ENCODE measurements at regions of chr6 and their contacts with region 1.

Region 1: GRCh38 chr6:29847871-29848630 is 20.4 kb downstream of the HLA-G start:
- DNase-seq: peak; percentile 69
- H3K4me3 Mint-ChIP-seq: no peak overlapping the region
- H3K27ac Mint-ChIP-seq: no peak overlapping the region
- H3K4me1 Mint-ChIP-seq: peaks cover 13% of the 10 kb centered on the region
- H3K27me3 Mint-ChIP-seq: peaks cover 6% of the 10 kb centered on the region
- CTCF ChIP-seq: peak; percentile 97

Region 2: GRCh38 chr6:29696155-29697125 is 151.6 kb before region 1 on chr6:
- CTCF ChIA-PET with region 1: interaction called, 10 read pairs
- POLR2A ChIA-PET with region 1: no interaction called
- intact Hi-C with region 1: no loop called
- DNase-seq: peak; percentile 57
- H3K4me3 Mint-ChIP-seq: no peak overlapping the region
- H3K27ac Mint-ChIP-seq: no peak overlapping the region
- H3K4me1 Mint-ChIP-seq: no peaks in the 10 kb centered on the region
- H3K27me3 Mint-ChIP-seq: no peaks in the 10 kb centered on the region
- CTCF ChIP-seq: peak; percentile 64

Region 3: DNA sequence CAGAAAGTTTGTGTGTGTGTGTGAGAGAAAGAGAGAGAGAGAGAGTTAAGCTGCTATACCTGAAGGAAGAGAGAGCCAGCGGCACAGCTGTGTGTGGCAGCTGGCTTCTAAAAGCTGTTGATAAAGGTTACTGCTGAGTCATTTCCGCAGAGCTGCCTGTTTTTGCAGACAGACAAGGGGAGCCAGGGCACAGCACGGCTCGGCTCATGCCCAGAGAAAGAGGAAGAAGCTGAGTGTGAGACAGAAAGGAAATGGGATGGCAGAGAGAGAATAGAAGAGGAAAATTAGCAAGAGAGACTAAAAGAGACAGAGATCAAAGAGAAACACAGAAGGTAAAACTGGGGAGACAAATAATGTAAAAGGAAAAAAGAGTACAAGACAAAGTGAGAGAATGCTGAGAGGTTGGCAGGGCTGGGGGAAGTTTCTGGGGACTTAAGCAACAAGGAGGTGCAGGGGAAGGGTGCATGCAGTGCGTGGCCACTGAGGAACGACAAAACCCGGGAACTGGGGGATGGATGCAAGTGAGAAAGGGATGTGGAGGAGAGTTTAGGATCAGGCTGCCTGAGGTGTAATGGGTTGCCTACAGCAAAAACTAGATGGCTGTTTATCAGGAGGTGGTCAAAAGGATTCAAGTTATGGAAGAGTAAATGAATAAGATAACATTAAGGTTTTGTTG is 117.0 kb after region 1 on chr6:
- CTCF ChIA-PET with region 1: interaction called, 22 read pairs
- POLR2A ChIA-PET with region 1: interaction called, 3 read pairs
- intact Hi-C with region 1: loop called (anchors 2 kb)
- DNase-seq: peak; percentile 88
- H3K4me3 Mint-ChIP-seq: peak overlapping the region; percentile 67
- H3K27ac Mint-ChIP-seq: peak overlapping the region; percentile 73
- H3K4me1 Mint-ChIP-seq: peaks cover 35% of the 10 kb centered on the region
- H3K27me3 Mint-ChIP-seq: no peaks in the 10 kb centered on the region
- CTCF ChIP-seq: no peak

Region 4: DNA sequence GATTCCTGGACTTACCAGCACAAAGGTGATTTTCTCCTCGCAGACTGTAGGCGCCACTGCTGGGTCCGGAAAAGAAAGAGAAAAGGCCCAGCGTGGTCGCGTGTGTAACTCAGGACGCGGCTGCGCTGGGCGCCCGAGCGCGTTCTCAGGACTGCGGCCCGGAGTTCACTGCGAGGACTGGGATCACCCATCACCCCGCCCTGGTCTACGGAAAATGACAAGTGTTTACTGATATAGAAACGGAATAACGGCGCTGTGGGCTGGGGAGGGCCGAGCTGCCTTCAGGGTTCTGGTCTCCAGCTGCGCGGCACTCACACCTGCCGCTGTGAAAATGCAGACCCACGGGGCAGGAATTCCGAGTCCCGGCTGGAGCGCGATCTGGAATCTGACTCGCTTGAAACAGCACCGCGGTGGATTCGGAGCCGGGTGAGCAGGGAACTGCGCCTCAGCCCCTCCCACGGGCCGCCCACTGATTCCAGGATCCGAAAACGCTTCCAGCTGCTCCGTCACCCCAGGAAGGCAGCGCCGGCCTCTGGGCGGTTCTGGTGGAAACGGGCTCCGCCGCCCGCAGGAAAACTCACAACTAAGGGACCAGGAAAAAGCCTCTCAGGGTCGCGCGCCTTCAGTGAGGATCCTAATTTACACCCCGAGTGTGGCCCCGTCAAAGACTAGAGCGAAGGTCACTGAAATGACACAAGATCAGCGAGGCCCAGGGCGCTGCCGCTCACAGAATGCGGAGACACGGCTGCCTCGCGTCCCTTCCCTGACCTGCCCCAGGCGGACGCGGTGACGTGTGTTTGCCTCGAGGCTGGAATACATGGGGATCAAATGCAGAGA is 128.8 kb after region 1 on chr6:
- CTCF ChIA-PET with region 1: interaction called, 14 read pairs
- POLR2A ChIA-PET with region 1: interaction called, 4 read pairs
- intact Hi-C with region 1: loop called (anchors 1 kb)
- DNase-seq: peak; percentile 74
- H3K4me3 Mint-ChIP-seq: peak overlapping the region; percentile 75
- H3K27ac Mint-ChIP-seq: peak overlapping the region; percentile 86
- H3K4me1 Mint-ChIP-seq: peaks cover 17% of the 10 kb centered on the region
- H3K27me3 Mint-ChIP-seq: no peaks in the 10 kb centered on the region
- CTCF ChIP-seq: peak; percentile 13

Region 5: GRCh38 chr6:30013291-30013922 is 165.4 kb after region 1 on chr6:
- CTCF ChIA-PET with region 1: interaction called, 22 read pairs
- POLR2A ChIA-PET with region 1: no interaction called
- intact Hi-C with region 1: loop called (anchors 1 kb)
- DNase-seq: peak; percentile 19
- H3K4me3 Mint-ChIP-seq: no peak overlapping the region
- H3K27ac Mint-ChIP-seq: no peak overlapping the region
- H3K4me1 Mint-ChIP-seq: no peaks in the 10 kb centered on the region
- H3K27me3 Mint-ChIP-seq: no peaks in the 10 kb centered on the region
- CTCF ChIP-seq: peak; percentile 71

Region 6: GRCh38 chr6:30037182-30037788 is 189.2 kb after region 1 on chr6:
- CTCF ChIA-PET with region 1: interaction called, 3 read pairs
- POLR2A ChIA-PET with region 1: no interaction called
- intact Hi-C with region 1: loop called (anchors 1 kb)
- DNase-seq: peak; percentile 45
- H3K4me3 Mint-ChIP-seq: no peak overlapping the region
- H3K27ac Mint-ChIP-seq: no peak overlapping the region
- H3K4me1 Mint-ChIP-seq: peaks cover 23% of the 10 kb centered on the region
- H3K27me3 Mint-ChIP-seq: no peaks in the 10 kb centered on the region
- CTCF ChIP-seq: peak; percentile 52

Region 7: GRCh38 chr6:30169658-30170614 is 321.9 kb after region 1 on chr6:
- CTCF ChIA-PET with region 1: interaction called, 4 read pairs
- POLR2A ChIA-PET with region 1: no interaction called
- intact Hi-C with region 1: loop called (anchors 2 kb)
- DNase-seq: peak; percentile 63
- H3K4me3 Mint-ChIP-seq: no peak overlapping the region
- H3K27ac Mint-ChIP-seq: no peak overlapping the region
- H3K4me1 Mint-ChIP-seq: no peaks in the 10 kb centered on the region
- H3K27me3 Mint-ChIP-seq: peaks cover 13% of the 10 kb centered on the region
- CTCF ChIP-seq: peak; percentile 81

Region 8: GRCh38 chr6:30640476-30640875 is 792.4 kb after region 1 on chr6:
- CTCF ChIA-PET with region 1: no interaction called
- POLR2A ChIA-PET with region 1: no interaction called
- intact Hi-C with region 1: no loop called
- DNase-seq: peak; percentile 9
- H3K4me3 Mint-ChIP-seq: no peak overlapping the region
- H3K27ac Mint-ChIP-seq: no peak overlapping the region
- H3K4me1 Mint-ChIP-seq: peaks cover 1% of the 10 kb centered on the region
- H3K27me3 Mint-ChIP-seq: no peaks in the 10 kb centered on the region
- CTCF ChIP-seq: no peak